ENCODE measurements at regions of chr2 and their contacts with region 1.

Region 1: DNA sequence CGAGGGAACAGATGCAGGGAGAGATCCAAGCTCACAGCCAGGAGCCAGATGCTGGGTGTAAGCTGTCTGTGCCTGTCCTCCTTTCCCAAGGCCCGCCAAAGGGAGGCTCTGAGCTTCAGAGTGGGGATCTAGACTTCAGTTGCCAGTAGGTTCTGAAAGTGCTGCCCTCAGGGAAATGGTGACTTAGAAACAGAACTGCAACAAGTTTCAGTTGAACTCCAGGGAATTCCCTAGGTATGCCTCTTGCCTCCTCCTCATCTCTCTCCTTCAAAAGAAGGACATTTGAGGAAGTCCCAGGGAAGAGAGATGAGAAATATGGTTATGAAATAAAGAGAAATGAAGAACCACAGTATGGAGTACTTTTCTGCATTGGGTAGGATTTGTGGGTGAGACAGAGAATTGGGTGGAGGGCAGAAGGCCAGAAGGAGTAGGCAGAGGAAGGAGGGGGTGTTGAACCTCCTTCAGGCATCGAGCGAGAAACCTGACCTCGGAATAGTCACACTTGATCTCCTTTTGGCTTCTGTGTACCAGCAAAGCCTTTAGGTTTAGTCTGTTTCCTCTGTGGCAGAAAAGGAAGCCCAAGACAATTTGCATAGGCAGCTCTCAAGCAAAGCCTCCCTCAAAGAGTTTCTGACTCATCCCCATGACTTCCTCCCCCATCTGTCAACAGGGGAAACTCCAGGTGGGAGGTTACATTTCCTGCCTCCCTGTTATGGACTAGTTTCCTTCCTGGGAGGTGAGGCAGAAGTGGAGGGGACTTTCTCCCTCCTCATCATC is 45.7 kb downstream of the QPCT start:
- DNase-seq: peak; percentile 75
- CTCF ChIP-seq: no peak

Region 2: DNA sequence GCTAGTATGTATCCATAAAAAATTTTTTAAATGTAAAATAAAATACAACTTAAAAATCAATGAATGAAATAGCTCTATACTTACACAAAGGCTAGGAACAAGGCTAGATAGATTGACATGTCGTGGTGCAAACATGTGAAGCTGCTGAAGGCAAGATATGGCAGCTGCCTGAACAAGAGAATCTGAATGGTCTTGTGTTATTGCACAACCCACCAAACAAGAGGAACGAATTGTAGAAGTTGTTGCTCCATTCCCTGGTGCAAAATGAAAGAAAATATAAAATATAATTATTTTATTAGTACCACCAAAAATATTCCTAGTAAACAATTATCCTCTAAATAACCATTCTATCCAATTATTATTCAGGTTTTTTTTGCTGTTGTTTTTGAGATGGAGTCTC is 352.4 kb before region 1 on chr2:
- in situ Hi-C with region 1: no loop called
- DNase-seq: no peak
- CTCF ChIP-seq: no peak

Region 3: DNA sequence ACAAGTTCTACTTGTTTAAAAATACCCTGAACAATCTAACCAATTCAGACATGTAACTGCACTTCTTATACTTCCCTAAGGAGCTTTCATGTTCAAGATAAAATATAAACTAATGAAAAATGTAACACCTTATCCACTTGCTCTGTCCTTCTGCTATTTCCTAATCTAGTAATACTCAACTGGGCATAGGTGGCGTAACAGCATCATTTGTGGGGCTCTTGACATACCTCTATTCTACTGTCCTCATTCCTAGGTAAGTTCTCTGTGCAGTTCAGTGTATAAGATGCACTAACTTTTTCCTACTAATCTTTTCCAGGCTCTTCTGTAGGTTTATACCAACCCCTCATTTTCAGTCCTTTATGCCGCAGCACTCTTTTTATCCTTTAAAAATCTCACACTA is 102.2 kb before region 1 on chr2:
- in situ Hi-C with region 1: no loop called
- DNase-seq: peak; percentile 37
- CTCF ChIP-seq: no peak

Region 4: GRCh38 chr2:37456479-37456878 is 66.3 kb after region 1 on chr2:
- in situ Hi-C with region 1: no loop called
- DNase-seq: no peak
- CTCF ChIP-seq: no peak

Region 5: GRCh38 chr2:37877457-37878315 is 487.5 kb after region 1 on chr2:
- in situ Hi-C with region 1: loop called (anchors 5 kb)
- DNase-seq: peak; percentile 50
- CTCF ChIP-seq: peak; percentile 48

Region 6: GRCh38 chr2:38264396-38265281 is 874.5 kb after region 1 on chr2:
- in situ Hi-C with region 1: loop called (anchors 10 kb)
- DNase-seq: no peak
- CTCF ChIP-seq: no peak

Measured in GM13976 (cell line).